Caco-2 (cell line): ENCODE measurements at regions of chr20 and their contacts with region 1.

Region 1: DNA sequence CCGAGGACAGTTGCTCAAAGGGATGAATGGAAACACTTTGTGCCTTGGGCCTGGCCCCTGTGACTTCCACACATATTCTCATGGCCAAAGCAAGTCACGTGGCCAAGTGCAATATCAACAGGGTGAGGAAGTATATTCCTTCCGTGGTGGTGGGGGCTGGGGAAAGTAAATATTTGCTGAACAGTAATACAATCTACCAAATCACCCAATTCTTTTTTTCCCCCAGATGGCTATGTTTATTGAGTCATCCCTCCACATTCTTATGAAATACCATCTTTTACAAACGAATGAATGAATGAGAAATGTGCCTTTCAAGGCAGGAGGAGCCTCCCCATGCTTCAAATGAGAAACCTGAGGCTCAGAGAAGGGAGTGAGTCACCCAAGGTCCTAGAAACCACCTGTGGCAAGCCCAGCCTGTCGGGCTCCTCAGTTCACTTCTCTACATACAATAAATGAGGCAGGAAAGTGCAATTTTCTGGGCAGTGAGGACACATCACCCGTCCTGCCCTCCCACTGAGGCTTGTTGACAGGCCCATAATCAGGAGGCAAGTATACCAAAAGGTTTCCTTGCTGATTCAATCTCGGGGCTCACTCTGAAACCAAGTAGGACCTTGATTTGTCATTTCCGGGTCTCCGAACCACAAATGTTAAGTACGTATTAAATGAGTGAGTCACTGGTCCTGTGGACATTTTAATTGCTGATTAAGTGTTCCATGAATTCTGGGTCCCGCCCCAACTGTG is 25.3 kb upstream of the TOP1 start:
- DNase-seq: peak; percentile 93 to 96
- H3K4me3 ChIP-seq: no peak overlapping the region
- H3K4me3 Mint-ChIP-seq: peak overlapping the region; percentile 65
- H3K27ac Mint-ChIP-seq: peak overlapping the region; percentile 89
- H3K4me1 ChIP-seq: peaks cover 38% of the 10 kb centered on the region
- H3K4me1 Mint-ChIP-seq: peaks cover 39% of the 10 kb centered on the region
- H3K27me3 ChIP-seq: no peaks in the 10 kb centered on the region
- H3K27me3 Mint-ChIP-seq: no peaks in the 10 kb centered on the region
- CTCF ChIP-seq: no peak

Region 2: GRCh38 chr20:40922865-40923264 is 80.4 kb before region 1 on chr20:
- CTCF ChIA-PET with region 1: no interaction called
- POLR2A ChIA-PET with region 1: no interaction called
- intact Hi-C with region 1: no loop called
- DNase-seq: no peak
- H3K4me3 ChIP-seq: no peak overlapping the region
- H3K4me3 Mint-ChIP-seq: no peak overlapping the region
- H3K27ac Mint-ChIP-seq: no peak overlapping the region
- H3K4me1 ChIP-seq: no peaks in the 10 kb centered on the region
- H3K4me1 Mint-ChIP-seq: no peaks in the 10 kb centered on the region
- H3K27me3 ChIP-seq: no peaks in the 10 kb centered on the region
- H3K27me3 Mint-ChIP-seq: peaks cover 13% of the 10 kb centered on the region
- CTCF ChIP-seq: no peak

Region 3: GRCh38 chr20:41017390-41018042 is 14.2 kb after region 1 on chr20:
- CTCF ChIA-PET with region 1: interaction called, 3 read pairs
- POLR2A ChIA-PET with region 1: interaction called, 5 read pairs
- intact Hi-C with region 1: loop called (anchors 1 kb)
- DNase-seq: peak; percentile 91 to 93
- H3K4me3 ChIP-seq: no peak overlapping the region
- H3K4me3 Mint-ChIP-seq: peak overlapping the region; percentile 49
- H3K27ac Mint-ChIP-seq: peak overlapping the region; percentile 46
- H3K4me1 ChIP-seq: peaks cover 32% of the 10 kb centered on the region
- H3K4me1 Mint-ChIP-seq: peaks cover 54% of the 10 kb centered on the region
- H3K27me3 ChIP-seq: no peaks in the 10 kb centered on the region
- H3K27me3 Mint-ChIP-seq: no peaks in the 10 kb centered on the region
- CTCF ChIP-seq: peak; percentile 40 to 45